WTC11 (cell line): ENCODE measurements at regions of chr2 and their contacts with region 1.

Region 1: DNA sequence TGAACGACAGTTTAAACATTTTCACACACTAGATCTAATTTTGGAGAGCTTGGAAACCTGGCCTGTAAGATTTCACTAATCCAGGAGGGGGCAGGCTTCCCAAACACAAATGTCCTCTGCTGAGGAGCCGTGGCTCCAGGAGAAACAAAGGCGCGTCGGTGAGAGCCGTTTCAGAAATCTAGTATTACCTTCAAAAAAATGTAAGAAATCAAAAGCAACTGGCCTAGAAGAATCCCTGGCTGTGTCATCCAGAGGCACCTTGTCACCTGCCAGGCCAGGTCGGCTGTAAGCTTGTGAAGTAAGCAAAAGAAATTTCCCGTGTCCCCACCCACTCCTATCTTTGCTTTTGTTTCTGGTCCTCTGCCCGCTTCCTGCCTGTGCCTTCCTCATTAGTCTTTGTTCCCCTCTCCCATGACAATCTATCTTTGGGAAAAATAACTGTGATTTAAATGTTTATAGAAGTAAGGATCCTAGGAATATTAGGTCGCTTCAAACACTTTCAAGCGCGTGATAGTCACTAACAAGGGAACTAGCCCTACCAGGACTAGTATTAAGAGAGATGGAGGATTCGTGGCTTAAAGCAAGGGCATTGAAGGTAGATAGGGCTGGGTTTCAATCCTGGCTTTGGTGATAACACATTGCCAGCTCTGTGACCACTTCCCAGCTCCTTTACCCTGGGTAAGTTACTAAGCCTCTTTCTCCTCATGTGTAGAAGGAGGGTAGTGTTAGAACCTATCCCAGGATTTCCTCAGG is 99.5 kb upstream of the STK39 start:
- DNase-seq: peak; percentile 71
- ATAC-seq: peak; percentile 52
- H3K4me3 Mint-ChIP-seq: peak overlapping the region; percentile 74
- H3K27ac Mint-ChIP-seq: peak overlapping the region; percentile 24; the same call in 1 of the 2 replicates
- H3K4me1 Mint-ChIP-seq: peaks cover 20% of the 10 kb centered on the region
- H3K27me3 Mint-ChIP-seq: no peaks in the 10 kb centered on the region
- CTCF ChIP-seq: peak; percentile 73

Region 2: GRCh38 chr2:168336864-168337263 is 10.0 kb before region 1 on chr2:
- CTCF ChIA-PET with region 1: interaction called, 10 read pairs
- POLR2A ChIA-PET with region 1: no interaction called
- DNase-seq: peak; percentile 74
- ATAC-seq: peak; percentile 100
- H3K4me3 Mint-ChIP-seq: no peak overlapping the region
- H3K27ac Mint-ChIP-seq: no peak overlapping the region
- H3K4me1 Mint-ChIP-seq: peaks cover 18% of the 10 kb centered on the region
- H3K27me3 Mint-ChIP-seq: peaks cover 2% of the 10 kb centered on the region; the same call in 1 of the 2 replicates
- CTCF ChIP-seq: peak; percentile 23; the same call in 1 of the 2 replicates

Region 3: DNA sequence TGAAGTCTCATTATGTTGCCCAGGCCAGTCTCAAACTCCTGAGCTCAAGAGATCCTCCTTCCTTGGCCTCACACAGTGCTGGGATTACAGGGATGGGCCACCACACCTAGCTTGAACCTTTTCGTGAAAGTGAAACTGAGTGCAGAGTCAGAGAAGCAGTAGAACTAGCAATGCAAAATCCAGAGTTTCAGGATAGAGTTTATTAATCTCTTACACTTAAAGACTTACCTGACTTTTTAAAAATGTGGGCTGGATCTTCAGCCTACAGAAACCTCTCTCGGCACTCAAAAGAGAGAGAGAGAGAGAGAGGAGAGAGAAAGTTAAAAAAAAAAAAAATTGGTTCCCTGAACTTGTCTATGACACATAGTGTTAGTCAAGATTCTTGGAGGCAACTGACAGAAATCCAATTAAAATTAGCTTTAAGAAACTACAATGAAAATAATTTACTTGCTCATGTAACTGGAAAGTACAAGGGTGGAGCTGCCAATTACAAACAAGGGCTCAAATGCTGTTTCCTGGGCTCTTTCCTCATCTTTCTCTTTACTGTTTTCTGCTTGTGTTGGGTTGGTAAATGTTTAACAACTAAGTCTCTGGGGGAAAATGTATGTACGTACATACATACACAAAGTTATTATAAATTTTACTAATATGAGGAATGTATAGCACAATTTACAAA is 11.0 kb after region 1 on chr2:
- CTCF ChIA-PET with region 1: interaction called, 13 read pairs
- POLR2A ChIA-PET with region 1: no interaction called
- DNase-seq: no peak
- ATAC-seq: no peak
- H3K4me3 Mint-ChIP-seq: no peak overlapping the region
- H3K27ac Mint-ChIP-seq: no peak overlapping the region
- H3K4me1 Mint-ChIP-seq: peaks cover 15% of the 10 kb centered on the region
- H3K27me3 Mint-ChIP-seq: no peaks in the 10 kb centered on the region; the same call in 1 of the 2 replicates
- CTCF ChIP-seq: no peak

Region 4: DNA sequence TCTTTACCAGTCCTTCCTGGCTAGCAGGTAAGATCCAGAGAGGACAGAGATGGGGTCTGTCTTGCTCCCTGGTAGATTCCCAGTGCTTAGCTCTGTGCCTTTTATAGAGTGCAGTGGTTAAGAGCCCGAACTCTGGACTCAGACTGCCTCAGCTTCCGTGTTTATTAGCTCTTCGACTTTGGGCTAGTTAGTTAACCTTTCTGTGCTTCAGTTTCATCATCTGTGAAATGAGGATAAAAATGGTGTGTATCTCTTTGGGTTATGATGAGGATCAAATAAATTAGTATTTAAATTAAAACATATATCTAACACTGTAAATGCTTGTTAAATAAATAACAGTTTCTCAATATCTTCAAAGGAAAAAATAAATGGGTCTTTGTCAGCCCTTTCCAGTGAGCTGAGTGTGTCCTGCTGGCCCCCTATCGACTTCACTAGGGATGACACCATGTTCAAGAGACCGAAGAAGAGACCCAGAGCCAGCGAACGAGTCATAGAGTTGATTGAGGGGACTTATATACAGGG is 147.3 kb after region 1 on chr2:
- CTCF ChIA-PET with region 1: interaction called, 10 read pairs
- POLR2A ChIA-PET with region 1: interaction called, 3 read pairs
- DNase-seq: peak; percentile 49
- ATAC-seq: peak; percentile 86
- H3K4me3 Mint-ChIP-seq: no peak overlapping the region
- H3K27ac Mint-ChIP-seq: no peak overlapping the region
- H3K4me1 Mint-ChIP-seq: peaks cover 35% of the 10 kb centered on the region
- H3K27me3 Mint-ChIP-seq: no peaks in the 10 kb centered on the region; the same call in 1 of the 2 replicates
- CTCF ChIP-seq: peak; percentile 32; the same call in 1 of the 2 replicates

Region 5: DNA sequence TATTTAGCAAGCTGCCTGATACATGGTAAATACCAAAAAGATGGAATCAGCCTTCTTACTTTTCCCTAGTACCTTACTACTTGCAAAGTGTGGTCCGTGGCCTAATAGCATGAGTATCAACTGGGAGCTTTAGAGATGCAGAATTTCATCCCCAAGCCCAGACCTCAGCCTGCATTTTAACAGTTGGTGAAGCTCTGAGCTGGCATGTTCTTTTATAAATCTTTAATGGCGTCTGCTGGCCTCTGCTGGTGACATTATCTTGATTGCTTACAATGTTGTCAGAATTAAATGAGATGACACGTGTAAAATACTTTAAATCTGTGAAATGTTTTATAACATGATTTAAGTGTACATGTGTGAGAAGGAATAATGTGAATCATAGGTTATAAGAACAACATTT is 340.4 kb after region 1 on chr2:
- CTCF ChIA-PET with region 1: interaction called, 21 read pairs
- POLR2A ChIA-PET with region 1: no interaction called
- DNase-seq: no peak
- ATAC-seq: peak; percentile 65
- H3K4me3 Mint-ChIP-seq: no peak overlapping the region
- H3K27ac Mint-ChIP-seq: no peak overlapping the region
- H3K4me1 Mint-ChIP-seq: peaks cover 26% of the 10 kb centered on the region
- H3K27me3 Mint-ChIP-seq: no peaks in the 10 kb centered on the region
- CTCF ChIP-seq: no peak